Activated CD4-positive, alpha-beta T cell treated with anti-CD3 and anti-CD28 coated beads, Interleukin-2, amount 10 ng/mL, durations not matched to agents 24 days and 14 days (primary cell): ENCODE measurements at regions of chr6 and their contacts with region 1.

Region 1: GRCh38 chr6:144675231-144675861 is 390.2 kb downstream of the UTRN start:
- DNase-seq: peak; percentile 80
- H3K4me3 Mint-ChIP-seq: peak overlapping the region; percentile 42
- H3K27ac Mint-ChIP-seq: peak overlapping the region; percentile 84
- H3K4me1 Mint-ChIP-seq: peaks cover 35% of the 10 kb centered on the region
- H3K27me3 Mint-ChIP-seq: no peaks in the 10 kb centered on the region

Region 2: GRCh38 chr6:144659202-144660182 is 15.9 kb before region 1 on chr6:
- intact Hi-C with region 1: loop called (anchors 1 kb)
- DNase-seq: peak; percentile 71
- H3K4me3 Mint-ChIP-seq: peak overlapping the region; percentile 67
- H3K27ac Mint-ChIP-seq: peak overlapping the region; percentile 88
- H3K4me1 Mint-ChIP-seq: peaks cover 24% of the 10 kb centered on the region
- H3K27me3 Mint-ChIP-seq: no peaks in the 10 kb centered on the region